GM12878 (cell line): ENCODE measurements at regions of chr1 and their contacts with region 1.

Region 1: DNA sequence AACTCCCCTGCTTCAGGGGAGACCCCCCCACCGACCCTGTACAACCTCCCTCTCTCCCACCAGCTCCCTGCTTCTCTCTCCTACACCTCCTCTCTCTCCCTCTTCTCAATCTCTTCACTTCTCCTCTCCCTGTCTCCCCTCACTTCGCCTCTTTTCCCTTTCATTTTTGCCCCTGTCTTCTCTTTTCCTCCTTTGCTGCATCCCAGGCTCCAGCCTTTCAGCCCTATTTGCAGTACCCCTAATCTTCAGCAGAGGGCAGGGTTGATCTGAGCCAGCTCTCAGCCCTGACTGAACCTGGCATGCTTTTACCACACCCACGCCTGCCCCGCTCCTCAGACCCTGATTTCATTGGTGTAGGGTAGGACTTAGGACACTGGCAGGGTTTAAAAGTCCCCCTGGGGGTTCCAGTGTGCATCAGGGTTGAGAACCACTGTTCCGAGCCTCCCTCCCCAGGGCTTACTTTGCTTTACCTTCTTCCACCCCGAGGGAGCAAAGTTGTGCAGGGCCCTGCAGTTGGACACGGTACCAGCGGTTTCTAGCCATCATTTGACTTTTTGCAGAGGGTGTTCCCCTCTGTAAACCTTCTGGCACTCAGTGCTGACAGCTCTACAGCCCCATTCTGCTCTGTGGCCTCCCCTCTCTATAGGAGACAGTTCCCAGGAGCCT is 67.3 kb upstream of the CNTN2 start:
- DNase-seq: no peak
- ATAC-seq: peak; percentile 90
- H3K4me3 ChIP-seq: no peak overlapping the region
- H3K27ac ChIP-seq: no peak overlapping the region
- H3K4me1 ChIP-seq: peaks cover 6% of the 10 kb centered on the region
- H3K27me3 ChIP-seq: peaks cover 0 to 5% of the 10 kb centered on the region in 2 experiments; a peak in 3 of 4 replicates
- CTCF ChIP-seq: peak; percentile 84 to 89 (median 88)
- EP300 ChIP-seq: no peak
- POLR2A ChIP-seq: no peak
- RAD21 ChIP-seq: peak; percentile 79

Region 2: DNA sequence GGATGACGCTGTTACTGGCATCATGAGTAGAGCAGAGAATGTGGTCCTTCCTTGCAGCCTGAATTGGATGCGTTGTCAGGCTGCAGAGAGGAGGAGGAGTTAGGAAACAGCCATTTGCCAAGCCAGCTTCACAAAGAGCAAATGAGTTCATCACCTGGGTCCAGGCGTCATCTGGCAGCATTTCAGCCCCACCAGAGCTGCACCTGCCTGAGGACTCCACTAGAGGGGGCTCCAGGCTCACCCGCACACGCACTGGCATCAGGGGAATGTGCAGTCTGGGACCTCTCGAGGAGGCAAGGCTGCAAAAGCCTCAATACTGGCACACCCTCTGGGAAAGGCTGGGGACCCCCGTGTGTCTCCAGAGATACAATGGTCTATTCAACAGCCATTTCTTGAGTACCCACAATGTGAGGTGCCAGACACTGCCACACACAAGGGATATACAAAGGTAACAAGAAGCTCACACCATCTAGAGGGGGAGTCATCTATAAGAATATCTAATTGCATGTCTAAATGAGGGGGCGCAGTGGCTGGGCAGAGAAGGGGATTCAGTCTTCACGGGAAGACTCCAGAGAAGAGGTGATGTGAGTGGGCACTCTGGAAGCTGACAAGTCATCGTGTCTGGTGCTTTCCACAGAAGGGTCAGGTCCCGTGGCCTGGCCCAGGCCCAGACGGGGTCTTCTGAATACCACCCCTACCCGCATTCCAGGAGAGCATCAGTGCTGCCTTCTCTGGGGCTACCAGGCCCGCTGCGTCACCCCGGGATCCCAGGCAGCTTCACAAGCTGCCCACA is 13.8 kb after region 1 on chr1:
- CTCF ChIA-PET with region 1: interaction called, 20 read pairs
- POLR2A ChIA-PET with region 1: no interaction called
- RAD21 ChIA-PET with region 1: interaction called, 5 read pairs
- SMC1A ChIA-PET with region 1: interaction called, 3 read pairs
- in situ Hi-C with region 1: no loop called
- intact Hi-C with region 1: no loop called
- DNase-seq: no peak
- ATAC-seq: peak; percentile 90
- H3K4me3 ChIP-seq: no peak overlapping the region
- H3K27ac ChIP-seq: no peak overlapping the region
- H3K4me1 ChIP-seq: no peaks in the 10 kb centered on the region; the same call in 1 of the 2 replicates
- H3K27me3 ChIP-seq: peaks cover 2 to 4% of the 10 kb centered on the region in 2 experiments; a peak in 1 of 4 replicates
- CTCF ChIP-seq: peak; percentile 94 to 97 (median 95); a peak in 5 of 6 replicates
- EP300 ChIP-seq: no peak
- POLR2A ChIP-seq: no peak
- RAD21 ChIP-seq: peak; percentile 95